ENCODE measurements at regions of chr12 and their contacts with region 1.

Region 1: DNA sequence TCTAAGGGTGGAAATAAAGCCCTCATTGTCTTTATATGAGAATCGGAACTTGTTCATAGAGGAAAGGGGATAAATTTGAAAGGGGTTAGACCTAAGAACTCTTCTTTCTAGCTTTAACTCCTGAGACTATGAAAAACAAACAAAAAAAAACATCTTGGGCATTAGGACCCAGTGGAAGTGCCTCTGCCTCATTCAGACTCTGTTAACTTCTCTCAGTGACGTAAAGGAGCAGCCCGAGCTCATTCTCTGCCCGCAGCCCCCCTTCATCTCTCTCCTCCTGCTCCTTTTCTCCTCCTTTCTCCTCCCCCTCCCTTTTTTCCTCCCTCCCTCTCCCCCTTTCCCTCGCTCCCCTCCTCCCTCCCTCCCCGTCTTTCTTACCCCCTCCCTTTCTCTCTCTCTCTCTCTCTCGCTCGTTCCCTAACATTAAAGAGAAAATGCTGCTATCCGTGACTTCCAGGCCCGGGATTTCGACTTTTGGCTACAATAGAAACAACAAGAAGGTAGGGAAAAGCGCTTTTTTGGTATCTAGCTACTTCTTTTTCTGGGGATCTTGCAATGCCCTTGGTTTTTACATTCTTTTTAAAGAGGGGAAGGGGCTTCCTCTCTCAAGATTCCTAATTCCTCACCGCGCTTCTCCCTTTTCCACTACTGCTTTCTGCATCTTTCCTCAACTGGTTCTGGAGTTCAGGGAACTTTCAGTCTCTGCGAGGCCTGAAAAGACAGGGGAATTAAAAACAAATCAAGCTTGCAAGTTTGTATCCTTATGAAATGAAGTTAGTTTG is at the start of gene RBMS2:
- DNase-seq: peak; percentile 66
- ATAC-seq: peak; percentile 90
- H3K4me3 Mint-ChIP-seq: peak within 1 kb of the TSS; percentile 75
- H3K27ac Mint-ChIP-seq: peak within 1 kb of the TSS; percentile 79
- H3K4me1 Mint-ChIP-seq: peaks cover 29% of the 10 kb centered on the region
- H3K27me3 Mint-ChIP-seq: no peaks in the 10 kb centered on the region
- total RNA-seq, gene RBMS2: 5.0 to 7.0 TPM

Region 2: DNA sequence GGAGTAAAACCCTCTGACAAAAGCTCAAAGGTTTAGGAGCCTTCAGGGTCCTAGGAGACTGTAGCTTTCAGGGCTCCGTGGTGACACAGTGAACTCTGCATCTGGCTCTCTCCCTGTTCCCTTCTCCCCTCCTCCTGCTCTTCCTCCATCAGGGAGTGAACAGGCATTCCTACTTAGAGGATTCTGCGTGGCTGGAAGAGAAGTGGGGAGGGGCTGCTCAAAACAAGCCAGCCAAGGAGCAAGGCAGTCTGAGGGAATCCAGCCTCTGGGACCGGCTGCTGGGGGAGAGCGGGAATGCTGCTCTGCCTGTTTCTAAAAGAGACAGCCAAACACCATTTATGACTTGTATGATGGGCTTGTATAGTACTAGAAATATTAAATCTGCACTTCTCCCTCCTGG is 49.3 kb after region 1 on chr12:
- CTCF ChIA-PET with region 1: interaction called, 100 read pairs
- POLR2A ChIA-PET with region 1: no interaction called
- intact Hi-C with region 1: no loop called
- DNase-seq: no peak
- ATAC-seq: no peak
- H3K4me3 Mint-ChIP-seq: no peak overlapping the region
- H3K27ac Mint-ChIP-seq: no peak overlapping the region
- H3K4me1 Mint-ChIP-seq: peaks cover 25% of the 10 kb centered on the region
- H3K27me3 Mint-ChIP-seq: no peaks in the 10 kb centered on the region

Region 3: GRCh38 chr12:56593909-56594621 is 72.3 kb after region 1 on chr12:
- CTCF ChIA-PET with region 1: interaction called, 69 read pairs
- POLR2A ChIA-PET with region 1: interaction called, 3 read pairs
- intact Hi-C with region 1: no loop called
- DNase-seq: peak; percentile 75
- ATAC-seq: peak; percentile 67
- H3K4me3 Mint-ChIP-seq: no peak overlapping the region
- H3K27ac Mint-ChIP-seq: no peak overlapping the region
- H3K4me1 Mint-ChIP-seq: no peaks in the 10 kb centered on the region
- H3K27me3 Mint-ChIP-seq: no peaks in the 10 kb centered on the region

Region 4: GRCh38 chr12:56630160-56630632 is 108.4 kb after region 1 on chr12 and contains the start of gene BAZ2A:
- CTCF ChIA-PET with region 1: interaction called, 3 read pairs
- POLR2A ChIA-PET with region 1: no interaction called
- intact Hi-C with region 1: loop called in 1 of 2 experiments (anchors 1 kb)
- DNase-seq: peak; percentile 94
- ATAC-seq: peak; percentile 69
- H3K4me3 Mint-ChIP-seq: peak within 1 kb of the TSS; percentile 96
- H3K27ac Mint-ChIP-seq: peak within 1 kb of the TSS; percentile 93
- H3K4me1 Mint-ChIP-seq: peaks cover 75% of the 10 kb centered on the region
- H3K27me3 Mint-ChIP-seq: no peaks in the 10 kb centered on the region
- total RNA-seq, gene BAZ2A: 79.4 to 129 TPM

Region 5: DNA sequence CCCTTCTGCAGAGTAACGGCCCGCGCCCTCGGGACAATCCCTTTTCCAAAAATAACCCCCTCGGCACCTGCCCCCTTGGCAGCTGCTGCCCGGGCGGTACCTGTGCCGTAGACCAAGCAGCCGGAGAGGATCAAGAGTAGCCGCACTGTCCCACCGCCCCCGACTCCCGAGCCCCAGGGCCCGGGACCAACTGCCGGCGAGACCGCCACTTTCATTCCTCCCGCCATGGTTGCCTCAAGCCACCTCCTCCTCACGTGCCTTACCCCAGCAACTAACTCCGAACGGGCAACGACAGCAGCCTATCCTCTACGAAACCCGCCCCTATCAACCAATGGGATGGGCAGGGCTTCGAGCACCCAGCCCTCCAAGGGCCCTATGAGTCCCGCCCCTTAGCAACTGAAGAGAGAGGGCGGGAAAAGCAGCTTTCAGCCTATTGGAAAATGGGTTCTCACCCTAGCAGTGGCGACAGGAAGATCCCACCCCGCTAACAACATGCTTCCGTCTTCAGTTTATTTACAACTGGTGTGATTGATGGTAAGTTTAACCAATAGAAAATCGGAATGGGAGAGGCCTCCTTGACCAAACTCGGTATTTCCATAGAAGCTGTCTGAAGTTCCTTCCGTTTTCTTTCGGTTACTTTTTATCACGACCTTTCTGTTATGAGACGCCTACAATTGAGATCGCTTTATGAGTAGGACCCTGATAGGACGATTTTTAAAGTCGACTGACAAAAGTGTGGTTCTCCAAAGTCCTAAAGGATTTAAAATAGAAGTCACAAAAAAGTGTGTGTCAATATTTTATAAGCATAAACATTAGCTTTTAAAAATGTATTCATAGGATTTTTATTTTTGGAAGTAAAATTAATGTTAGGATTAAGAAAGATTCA is 557.0 kb after region 1 on chr12 and contains the start of gene NEMP1:
- CTCF ChIA-PET with region 1: no interaction called
- POLR2A ChIA-PET with region 1: no interaction called
- intact Hi-C with region 1: no loop called
- DNase-seq: peak; percentile 97
- ATAC-seq: peak; percentile 95
- H3K4me3 Mint-ChIP-seq: peak within 1 kb of the TSS; percentile 97
- H3K27ac Mint-ChIP-seq: peak within 1 kb of the TSS; percentile 94
- H3K4me1 Mint-ChIP-seq: peaks cover 29% of the 10 kb centered on the region
- H3K27me3 Mint-ChIP-seq: no peaks in the 10 kb centered on the region
- total RNA-seq, gene NEMP1: 79.0 to 81.1 TPM

Region 6: DNA sequence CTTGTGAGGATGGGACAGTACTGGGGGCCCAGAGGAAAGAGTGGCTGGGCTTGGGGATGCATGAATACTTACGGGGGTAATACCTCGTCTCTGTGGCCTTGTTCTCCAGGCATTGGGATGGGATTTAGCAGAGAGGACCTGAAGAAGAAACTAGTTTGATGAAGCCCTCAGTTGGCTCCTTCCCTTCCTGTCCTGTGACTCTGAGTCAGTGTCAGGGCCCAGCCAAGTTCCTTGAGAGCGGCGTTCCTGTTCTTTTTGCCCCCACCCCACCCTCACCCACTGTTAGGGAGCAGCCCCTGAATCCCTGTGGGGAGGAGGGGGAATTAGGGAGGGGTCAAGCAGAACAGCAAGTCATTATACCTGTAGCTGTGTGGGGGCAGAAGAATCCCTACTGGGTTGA is 630.9 kb after region 1 on chr12:
- CTCF ChIA-PET with region 1: no interaction called
- POLR2A ChIA-PET with region 1: no interaction called
- intact Hi-C with region 1: no loop called
- DNase-seq: no peak
- ATAC-seq: no peak
- H3K4me3 Mint-ChIP-seq: no peak overlapping the region
- H3K27ac Mint-ChIP-seq: no peak overlapping the region
- H3K4me1 Mint-ChIP-seq: no peaks in the 10 kb centered on the region
- H3K27me3 Mint-ChIP-seq: no peaks in the 10 kb centered on the region